Activated T-helper 1 cell treated with anti-CD3 and anti-CD28 coated beads, Interleukin-12 subunit alpha, Interleukin-12 subunit beta, Interleukin-2, Interleukin-4 antibody, amounts not matched to agents 30 ng/mL and 10 ng/mL and 1 ng/mL, durations not matched to agents 14 hours and 24 hours and 36 hours (primary cell): ENCODE measurements at regions of chr1 and their contacts with region 1.

Region 1: DNA sequence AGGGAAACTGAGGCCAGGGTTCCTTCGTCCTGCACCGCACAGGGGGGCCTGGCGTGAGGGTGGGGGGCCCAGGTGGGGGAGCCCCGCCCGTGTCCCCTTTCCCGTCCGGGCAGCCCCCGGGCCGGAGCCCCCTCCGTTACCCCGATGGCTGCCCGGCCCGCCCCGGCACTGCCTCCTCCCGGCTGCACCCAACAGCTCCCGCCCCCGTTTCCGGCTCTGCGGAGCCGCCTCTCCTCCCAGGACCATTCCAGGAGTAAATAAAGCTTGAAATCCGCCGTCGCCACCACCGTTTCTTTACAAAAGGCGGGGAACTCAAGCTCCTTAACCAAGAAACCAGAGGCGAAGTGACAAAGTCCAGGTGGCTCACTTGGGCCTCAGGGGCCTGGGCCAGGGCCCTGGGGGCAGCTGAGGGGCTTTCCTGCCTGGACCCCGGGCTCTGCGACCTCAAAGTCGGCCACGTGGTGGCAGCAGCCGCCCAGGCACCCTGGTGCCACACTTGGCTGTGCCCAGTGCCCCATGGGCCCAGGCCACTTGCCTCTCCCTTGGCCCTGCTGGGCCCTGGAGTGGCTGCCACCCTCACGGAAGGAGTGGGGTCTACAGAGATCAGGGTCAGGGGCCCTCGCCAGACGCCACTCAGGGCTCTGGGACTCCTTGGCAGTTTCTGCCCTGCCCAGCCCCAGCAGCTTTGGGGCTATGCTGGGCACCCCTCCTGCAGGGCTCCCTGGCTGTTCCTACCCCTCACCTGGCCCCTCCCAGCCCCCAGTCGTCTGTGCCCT is 514 bp upstream of the FAAP20 start:
- DNase-seq: peak; percentile 88
- H3K4me3 Mint-ChIP-seq: peak overlapping the region; percentile 84
- H3K27ac Mint-ChIP-seq: peak overlapping the region; percentile 90
- H3K4me1 Mint-ChIP-seq: peaks cover 20% of the 10 kb centered on the region
- H3K27me3 Mint-ChIP-seq: no peaks in the 10 kb centered on the region

Region 2: DNA sequence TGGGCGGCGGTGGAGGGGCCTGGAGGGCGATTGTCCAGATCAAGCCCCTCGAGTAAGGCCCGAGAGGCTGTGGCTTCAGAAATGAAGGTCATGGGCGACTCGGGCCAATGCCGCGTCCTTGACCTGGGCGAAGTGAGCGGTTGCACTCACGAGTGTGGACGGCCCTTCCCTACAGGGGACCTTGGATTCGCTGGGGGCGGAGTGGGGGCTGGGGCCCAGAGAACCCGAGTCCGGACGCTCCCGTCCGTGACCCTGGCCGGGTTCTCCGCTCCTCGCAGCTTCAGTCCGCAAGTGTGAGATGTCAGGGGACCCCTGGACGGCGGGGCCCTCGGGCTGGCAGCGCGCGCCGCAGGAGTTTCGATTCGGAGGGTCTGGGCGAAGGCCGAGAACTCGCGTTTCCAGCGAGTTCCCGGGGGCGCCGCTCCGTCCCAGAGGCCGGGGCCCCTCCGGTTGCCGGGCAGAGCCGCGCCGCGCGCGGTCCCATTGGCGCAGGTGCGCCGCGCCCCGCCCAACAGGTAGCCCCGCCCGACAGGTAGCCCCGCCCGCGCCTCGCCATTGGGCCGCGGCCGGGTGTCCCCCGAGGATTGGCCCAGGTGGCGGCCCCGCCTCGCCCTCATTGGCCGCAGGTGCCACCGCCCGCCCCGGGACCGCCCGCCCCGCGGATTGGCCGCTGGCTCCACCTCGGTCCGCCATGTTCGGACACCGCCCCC is 145.2 kb before region 1 on chr1 and contains the start of gene PRKCZ:
- intact Hi-C with region 1: no loop called
- DNase-seq: peak; percentile 75
- H3K4me3 Mint-ChIP-seq: peak within 1 kb of the TSS; percentile 69
- H3K27ac Mint-ChIP-seq: no peak within 1 kb of the TSS
- H3K4me1 Mint-ChIP-seq: peaks cover 8% of the 10 kb centered on the region
- H3K27me3 Mint-ChIP-seq: peaks cover 48% of the 10 kb centered on the region
- total RNA-seq, gene PRKCZ: 4.1 TPM in 2 replicates

Region 3: GRCh38 chr1:2133039-2133878 is 61.8 kb before region 1 on chr1:
- intact Hi-C with region 1: loop called (anchors 1 kb)
- DNase-seq: peak; percentile 95
- H3K4me3 Mint-ChIP-seq: peak overlapping the region; percentile 73
- H3K27ac Mint-ChIP-seq: peak overlapping the region; percentile 48
- H3K4me1 Mint-ChIP-seq: peaks cover 6% of the 10 kb centered on the region
- H3K27me3 Mint-ChIP-seq: peaks cover 8% of the 10 kb centered on the region

Region 4: DNA sequence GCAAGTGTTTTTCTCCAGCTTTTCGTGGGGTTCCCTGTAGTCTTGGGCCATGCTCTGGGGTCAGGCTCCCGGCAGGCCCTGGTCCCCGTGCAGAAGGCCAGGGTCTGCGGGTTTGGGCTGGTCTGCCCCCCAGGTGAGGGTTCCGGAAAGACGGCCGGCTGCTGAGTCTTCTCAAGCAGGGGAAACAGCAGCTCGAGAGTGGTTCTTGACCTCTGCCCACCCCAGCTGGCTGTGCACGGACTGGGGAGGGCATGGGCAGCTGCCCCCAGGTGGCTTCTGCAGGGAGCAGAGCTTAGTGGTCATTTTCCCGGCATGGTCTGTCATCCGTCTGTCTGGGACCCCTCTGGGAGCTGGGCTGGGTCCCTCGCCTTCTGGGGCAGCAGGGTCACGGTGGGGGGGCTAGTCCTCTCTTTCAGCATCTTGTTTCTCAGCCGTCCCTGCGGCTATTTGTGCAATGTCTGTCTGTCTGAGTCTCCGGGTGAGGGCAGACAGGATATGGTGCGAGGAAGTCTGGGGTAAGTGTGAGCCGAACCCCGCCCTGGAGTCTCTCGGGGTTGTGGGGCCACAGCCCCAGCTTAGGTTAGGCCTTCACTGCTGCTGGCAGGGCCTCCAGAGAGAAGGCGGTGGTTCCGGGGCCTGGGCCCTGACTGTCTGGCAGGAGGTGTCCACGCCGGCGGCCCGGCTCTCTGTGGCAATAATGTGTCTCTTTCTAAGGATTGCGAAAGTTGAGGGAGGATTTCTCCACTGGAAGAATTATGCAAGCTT is 39.1 kb after region 1 on chr1:
- intact Hi-C with region 1: loop called (anchors 1 kb)
- DNase-seq: peak; percentile 68
- H3K4me3 Mint-ChIP-seq: peak overlapping the region; percentile 93
- H3K27ac Mint-ChIP-seq: peak overlapping the region; percentile 78
- H3K4me1 Mint-ChIP-seq: peaks cover 71% of the 10 kb centered on the region
- H3K27me3 Mint-ChIP-seq: no peaks in the 10 kb centered on the region

Region 5: DNA sequence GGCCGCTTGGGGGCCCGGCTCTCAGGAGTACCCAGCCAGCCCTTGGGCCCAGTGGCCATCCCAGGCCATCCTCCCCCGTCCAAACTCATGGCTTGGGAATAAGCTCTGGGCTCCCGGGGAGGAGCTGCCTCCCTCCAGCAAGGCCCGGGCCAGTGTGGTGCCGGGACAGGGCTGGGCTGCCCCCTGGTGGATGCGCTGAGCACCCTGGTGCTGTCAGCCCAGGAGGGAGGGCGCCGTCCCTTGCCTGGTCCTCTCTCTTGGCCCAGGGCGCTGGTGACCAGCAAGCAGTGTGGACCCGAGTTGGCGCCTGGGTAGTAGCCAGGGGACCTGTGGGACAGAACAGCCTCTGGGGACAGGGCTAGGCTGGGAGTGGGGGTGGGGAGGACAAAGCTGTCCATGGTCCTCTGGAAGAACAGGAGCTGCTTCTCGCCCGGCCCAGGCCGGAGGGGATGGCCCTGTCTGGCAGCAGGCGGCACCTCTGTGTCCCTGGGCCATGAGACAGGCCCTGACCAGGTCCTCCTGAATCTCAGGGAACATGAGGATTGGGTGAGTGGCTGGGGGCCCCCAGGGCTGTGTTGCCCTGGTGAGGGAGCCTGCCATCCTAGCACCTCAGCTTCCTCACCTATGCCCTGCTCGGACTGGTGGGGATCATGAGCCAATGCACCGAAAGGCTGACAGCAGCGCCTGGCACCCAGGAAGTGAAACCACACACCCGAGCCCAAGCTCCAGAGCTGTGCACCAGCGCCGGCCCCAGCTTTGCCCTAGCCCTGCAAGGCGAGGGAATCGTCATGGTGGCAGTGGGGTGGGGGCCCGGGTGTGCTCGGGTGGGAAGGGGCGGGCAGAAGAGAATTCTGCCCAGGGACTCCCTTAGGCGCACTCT is 186.9 kb after region 1 on chr1:
- intact Hi-C with region 1: loop called (anchors 1 kb)
- DNase-seq: peak; percentile 67
- H3K4me3 Mint-ChIP-seq: no peak overlapping the region
- H3K27ac Mint-ChIP-seq: no peak overlapping the region
- H3K4me1 Mint-ChIP-seq: no peaks in the 10 kb centered on the region
- H3K27me3 Mint-ChIP-seq: no peaks in the 10 kb centered on the region

Region 6: GRCh38 chr1:2545759-2546514 is 350.9 kb after region 1 on chr1:
- intact Hi-C with region 1: loop called (anchors 1 kb)
- DNase-seq: peak; percentile 87
- H3K4me3 Mint-ChIP-seq: peak overlapping the region; percentile 91
- H3K27ac Mint-ChIP-seq: peak overlapping the region; percentile 61
- H3K4me1 Mint-ChIP-seq: peaks cover 7% of the 10 kb centered on the region
- H3K27me3 Mint-ChIP-seq: peaks cover 13% of the 10 kb centered on the region

Region 7: DNA sequence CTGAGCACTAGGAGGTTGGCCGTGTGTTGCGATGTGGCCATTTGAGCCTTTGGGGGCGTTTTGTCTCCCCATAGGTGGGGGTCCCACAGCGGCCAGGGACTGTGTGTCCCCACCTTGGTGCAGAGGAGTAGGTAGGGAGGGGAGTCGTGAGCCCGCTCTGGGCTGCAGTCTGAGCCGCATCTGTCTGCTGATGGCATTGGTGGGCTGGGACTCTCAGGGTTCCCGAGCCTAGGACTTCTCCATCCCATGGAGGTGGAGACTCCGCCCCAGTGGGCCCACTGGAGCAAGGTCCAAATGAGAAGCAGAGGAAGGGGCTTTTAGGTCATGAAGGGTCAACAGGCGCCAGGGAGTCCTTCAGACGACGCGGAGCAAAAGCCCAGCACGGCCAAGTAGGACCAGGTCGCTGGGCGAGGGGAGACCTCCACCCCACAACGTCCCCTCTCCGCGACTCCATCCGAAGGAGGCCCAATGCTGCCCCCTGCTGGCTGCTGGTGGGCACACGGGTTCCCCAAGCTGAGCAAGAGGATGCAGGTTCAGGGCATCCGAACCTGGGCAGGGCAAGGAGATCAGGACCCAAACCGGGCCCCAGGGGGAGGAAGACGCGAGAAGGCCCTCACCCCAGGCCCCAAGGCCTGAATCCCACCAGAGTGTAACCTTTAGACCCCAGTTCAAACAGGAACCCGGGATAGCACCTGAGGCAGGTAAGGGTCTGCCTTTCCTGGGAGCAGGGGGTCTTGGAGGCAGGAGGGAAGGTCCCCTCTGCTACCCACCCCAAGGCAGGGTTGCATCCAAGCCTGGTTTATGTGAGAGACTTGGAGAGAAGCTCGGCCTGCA is 591.5 kb after region 1 on chr1:
- intact Hi-C with region 1: loop called (anchors 5 kb)
- DNase-seq: peak; percentile 51
- H3K4me3 Mint-ChIP-seq: no peak overlapping the region
- H3K27ac Mint-ChIP-seq: no peak overlapping the region
- H3K4me1 Mint-ChIP-seq: peaks cover 5% of the 10 kb centered on the region
- H3K27me3 Mint-ChIP-seq: peaks cover 16% of the 10 kb centered on the region